Activated T-helper 2 cell treated with anti-CD3 and anti-CD28 coated beads, Interferon-gamma antibody, Interleukin-2, Interleukin-4, amounts not matched to agents 10 μg/mL and 5 μg/mL and 100 μg/mL, durations not matched to agents 14 hours and 24 hours and 36 hours (primary cell): ENCODE measurements at regions of chr1 and their contacts with region 1.

Region 1: GRCh38 chr1:246931549-246932365 is at the start of gene AHCTF1:
- DNase-seq: peak; percentile 94
- H3K4me3 Mint-ChIP-seq: peak within 1 kb of the TSS; percentile 92
- H3K27ac Mint-ChIP-seq: peak within 1 kb of the TSS; percentile 92
- H3K4me1 Mint-ChIP-seq: peaks cover 19% of the 10 kb centered on the region
- H3K27me3 Mint-ChIP-seq: no peaks in the 10 kb centered on the region
- total RNA-seq, gene AHCTF1: 47.2 and 47.7 TPM in 2 replicates

Region 2: DNA sequence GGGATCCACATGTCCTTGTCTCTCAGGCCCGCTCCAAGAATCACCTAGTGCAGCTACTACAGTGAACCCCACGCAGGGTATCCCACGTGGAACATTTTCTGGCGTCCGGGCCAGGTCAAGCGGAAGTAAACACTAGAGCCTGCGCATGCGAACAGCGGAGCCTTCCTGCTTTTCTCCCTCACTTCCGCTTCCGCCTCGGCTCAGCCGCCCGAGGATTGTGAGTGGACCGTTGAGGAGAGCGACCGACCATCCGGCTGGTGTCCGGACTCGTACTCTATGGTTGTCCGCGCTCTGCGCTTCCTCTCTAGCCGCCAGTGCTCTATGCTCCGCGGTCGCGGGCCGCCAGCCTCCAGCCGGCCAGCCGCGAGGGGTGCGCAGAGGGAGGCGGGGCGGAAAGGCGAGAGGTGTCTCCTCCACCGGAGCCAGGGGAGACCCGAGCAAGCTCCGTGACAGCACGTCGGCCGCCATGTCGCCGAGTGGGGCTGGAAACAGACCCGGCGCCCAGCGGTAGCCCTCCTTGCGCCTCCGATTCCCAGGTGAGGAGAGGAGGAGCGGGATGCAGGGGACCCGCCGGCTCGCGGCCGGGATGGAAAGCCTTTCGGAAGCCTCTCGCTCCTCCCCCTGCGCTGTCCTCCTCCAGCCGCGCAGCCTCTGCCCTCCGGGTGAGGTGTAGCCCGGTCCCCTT is 365.5 kb before region 1 on chr1 and contains the starts of genes CNST and TFB2M:
- intact Hi-C with region 1: loop called (anchors 2 kb)
- DNase-seq: peak; percentile 93
- H3K4me3 Mint-ChIP-seq: peak within 1 kb of the TSS; percentile 99
- H3K27ac Mint-ChIP-seq: peak within 1 kb of the TSS; percentile 98
- H3K4me1 Mint-ChIP-seq: peaks cover 35% of the 10 kb centered on the region
- H3K27me3 Mint-ChIP-seq: no peaks in the 10 kb centered on the region
- total RNA-seq, gene CNST: 18.8 and 21.6 TPM in 2 replicates
- total RNA-seq, gene TFB2M: 21.0 and 21.7 TPM in 2 replicates

Region 3: GRCh38 chr1:246893191-246893939 is 38.4 kb before region 1 on chr1:
- intact Hi-C with region 1: loop called (anchors 2 kb)
- DNase-seq: no peak
- H3K4me3 Mint-ChIP-seq: no peak overlapping the region
- H3K27ac Mint-ChIP-seq: peak overlapping the region; percentile 80
- H3K4me1 Mint-ChIP-seq: peaks cover 12% of the 10 kb centered on the region
- H3K27me3 Mint-ChIP-seq: no peaks in the 10 kb centered on the region

Region 4: GRCh38 chr1:247103859-247104591 is 172.3 kb after region 1 on chr1 and contains the start of gene ZNF669:
- intact Hi-C with region 1: loop called (anchors 5 kb)
- DNase-seq: peak; percentile 88
- H3K4me3 Mint-ChIP-seq: peak within 1 kb of the TSS; percentile 91
- H3K27ac Mint-ChIP-seq: peak within 1 kb of the TSS; percentile 82
- H3K4me1 Mint-ChIP-seq: peaks cover 5% of the 10 kb centered on the region
- H3K27me3 Mint-ChIP-seq: peaks cover 29% of the 10 kb centered on the region
- total RNA-seq, gene ZNF669: 8.2 and 8.7 TPM in 2 replicates

Region 5: GRCh38 chr1:247331172-247331991 is 399.6 kb after region 1 on chr1 and contains the start of gene ZNF496:
- intact Hi-C with region 1: loop called (anchors 2 kb)
- DNase-seq: peak; percentile 69
- H3K4me3 Mint-ChIP-seq: peak within 1 kb of the TSS; percentile 90
- H3K27ac Mint-ChIP-seq: peak within 1 kb of the TSS; percentile 91
- H3K4me1 Mint-ChIP-seq: peaks cover 28% of the 10 kb centered on the region
- H3K27me3 Mint-ChIP-seq: no peaks in the 10 kb centered on the region
- total RNA-seq, gene ZNF496: 19.2 and 19.4 TPM in 2 replicates